ENCODE measurements at regions of chr20 and their contacts with region 1.

Region 1: DNA sequence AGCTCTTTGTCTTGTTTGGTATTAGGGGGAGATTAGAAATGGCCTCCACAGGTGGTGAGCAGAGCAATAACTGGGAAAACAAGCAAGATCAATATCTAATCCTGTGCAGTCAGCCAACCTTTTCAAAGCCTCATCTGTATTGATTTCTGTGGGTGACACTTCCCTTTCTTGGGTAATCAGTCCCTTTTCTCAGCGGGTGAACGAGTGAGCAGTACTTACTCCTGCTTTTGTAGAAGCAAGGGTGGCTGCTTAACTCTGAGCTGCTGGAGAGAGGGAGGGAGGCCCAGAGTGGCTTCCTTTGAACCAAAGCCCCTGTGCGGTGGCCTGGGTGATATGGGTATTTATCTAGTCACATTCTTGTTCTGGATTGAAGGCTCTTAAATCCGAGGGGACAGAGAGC is 254.8 kb upstream of the CHD6 start:
- DNase-seq: no peak
- H3K27ac ChIP-seq: no peak overlapping the region
- CTCF ChIP-seq: no peak

Region 2: DNA sequence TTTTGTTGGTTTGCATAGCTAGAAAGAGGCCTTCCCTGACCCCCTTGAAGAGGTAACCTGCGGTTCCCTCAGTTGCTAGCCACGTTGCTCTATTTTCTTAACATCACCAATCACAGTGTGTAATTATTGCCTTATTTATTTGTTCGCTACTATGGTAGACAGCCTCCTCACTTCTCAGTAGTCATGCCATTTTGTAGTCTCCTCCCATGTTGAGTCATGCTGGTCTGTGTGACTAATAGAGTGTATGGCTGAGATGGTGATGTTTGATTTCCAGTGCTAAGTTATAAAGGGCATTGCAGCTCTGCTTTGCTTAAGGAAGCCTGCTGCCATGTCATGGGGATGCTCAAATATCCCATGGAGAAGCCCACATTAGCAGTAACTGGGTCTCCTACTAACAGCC is 18.2 kb before region 1 on chr20:
- CTCF ChIA-PET with region 1: interaction called, 10 read pairs
- POLR2A ChIA-PET with region 1: no interaction called
- DNase-seq: peak; percentile 49
- H3K27ac ChIP-seq: no peak overlapping the region
- CTCF ChIP-seq: no peak

Region 3: DNA sequence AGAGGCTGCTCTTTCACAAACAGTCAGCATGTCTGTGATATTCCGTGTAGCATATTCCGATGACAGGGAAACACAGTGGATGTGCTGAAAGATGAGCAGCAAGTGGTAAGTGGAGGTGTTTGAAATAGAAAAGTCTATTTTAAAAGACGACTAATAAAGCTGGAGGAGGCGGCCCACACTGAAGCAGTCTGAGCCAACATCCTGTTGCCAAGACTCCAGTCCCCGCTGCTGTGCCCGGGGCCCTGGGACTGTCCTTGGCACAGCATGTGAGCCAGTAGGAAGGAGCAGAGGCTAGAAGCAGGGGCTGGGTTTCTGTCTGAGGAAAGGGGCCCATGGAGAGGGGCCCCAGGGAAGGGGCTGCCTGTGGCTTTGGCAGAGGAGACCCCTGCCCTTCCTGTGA is 96.7 kb after region 1 on chr20:
- CTCF ChIA-PET with region 1: no interaction called
- POLR2A ChIA-PET with region 1: no interaction called
- DNase-seq: no peak
- H3K27ac ChIP-seq: no peak overlapping the region
- CTCF ChIP-seq: no peak